GM10248 (cell line): ENCODE measurements at regions of chr6 and their contacts with region 1.

Region 1: GRCh38 chr6:45714741-45715507 is 300.7 kb downstream of the CLIC5 start:
- DNase-seq: peak; percentile 60
- CTCF ChIP-seq: peak; percentile 66

Region 2: DNA sequence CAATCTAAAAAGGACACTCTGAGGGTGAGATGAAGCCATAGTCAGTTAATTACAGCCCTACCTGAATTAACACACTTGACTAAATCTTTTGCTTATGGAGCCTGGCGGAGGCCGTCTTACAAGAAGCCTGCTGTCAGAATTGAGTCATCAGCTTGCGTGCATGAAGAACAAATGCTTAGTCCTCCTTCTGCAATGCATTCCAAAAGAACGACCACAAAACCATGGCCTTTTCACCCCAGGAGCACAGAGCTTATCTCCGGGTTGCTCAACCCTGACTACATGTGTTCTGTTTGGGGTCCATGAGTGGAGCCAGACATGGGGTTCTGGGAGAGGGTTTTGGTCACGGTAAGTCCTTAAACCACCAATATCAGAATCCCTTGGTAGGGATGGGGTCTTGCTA is 17.3 kb before region 1 on chr6:
- CTCF ChIA-PET with region 1: interaction called, 14 read pairs
- POLR2A ChIA-PET with region 1: no interaction called
- DNase-seq: no peak
- CTCF ChIP-seq: no peak